ENCODE measurements at regions of chr1 and their contacts with region 1.

Region 1: DNA sequence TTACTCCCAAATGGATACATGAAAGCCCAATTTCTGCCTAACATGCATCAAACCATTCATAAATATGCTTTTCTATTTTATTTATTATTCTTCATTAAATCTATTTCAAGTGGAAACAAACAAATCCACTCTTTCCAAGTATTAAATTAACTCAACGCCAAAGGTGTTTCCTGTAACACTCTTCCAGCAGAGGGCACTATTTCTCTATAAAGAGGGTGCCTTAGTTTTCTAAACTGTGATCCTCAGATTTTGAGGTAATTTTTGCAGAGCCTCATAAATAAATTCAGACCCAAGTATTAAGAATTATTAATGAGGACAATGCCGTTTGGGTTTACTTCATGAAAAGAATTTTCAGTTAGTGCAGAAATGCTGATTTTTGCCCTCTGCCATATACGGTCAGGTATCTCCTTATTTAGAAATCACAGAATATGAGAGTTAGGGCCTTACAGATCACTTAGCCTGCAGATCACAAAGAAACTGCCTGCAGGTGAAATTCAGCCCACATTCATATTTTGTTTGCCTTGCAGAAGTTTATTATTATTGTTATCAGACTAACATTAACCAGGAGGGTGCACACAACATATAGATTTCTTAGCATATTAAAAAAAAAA is 40.1 kb upstream of the MYSM1 start:
- DNase-seq: peak; percentile 78
- H3K4me3 ChIP-seq: no peak overlapping the region
- H3K27ac ChIP-seq: no peak overlapping the region
- H3K4me1 ChIP-seq: no peaks in the 10 kb centered on the region
- CTCF ChIP-seq: peak; percentile 98

Region 2: GRCh38 chr1:59699227-59699847 is 959.4 kb after region 1 on chr1:
- CTCF ChIA-PET with region 1: no interaction called
- POLR2A ChIA-PET with region 1: no interaction called
- intact Hi-C with region 1: loop called (anchors 2 kb)
- DNase-seq: peak; percentile 47
- H3K4me3 ChIP-seq: no peak overlapping the region
- H3K27ac ChIP-seq: no peak overlapping the region
- H3K4me1 ChIP-seq: no peaks in the 10 kb centered on the region
- CTCF ChIP-seq: peak; percentile 97

Region 3: DNA sequence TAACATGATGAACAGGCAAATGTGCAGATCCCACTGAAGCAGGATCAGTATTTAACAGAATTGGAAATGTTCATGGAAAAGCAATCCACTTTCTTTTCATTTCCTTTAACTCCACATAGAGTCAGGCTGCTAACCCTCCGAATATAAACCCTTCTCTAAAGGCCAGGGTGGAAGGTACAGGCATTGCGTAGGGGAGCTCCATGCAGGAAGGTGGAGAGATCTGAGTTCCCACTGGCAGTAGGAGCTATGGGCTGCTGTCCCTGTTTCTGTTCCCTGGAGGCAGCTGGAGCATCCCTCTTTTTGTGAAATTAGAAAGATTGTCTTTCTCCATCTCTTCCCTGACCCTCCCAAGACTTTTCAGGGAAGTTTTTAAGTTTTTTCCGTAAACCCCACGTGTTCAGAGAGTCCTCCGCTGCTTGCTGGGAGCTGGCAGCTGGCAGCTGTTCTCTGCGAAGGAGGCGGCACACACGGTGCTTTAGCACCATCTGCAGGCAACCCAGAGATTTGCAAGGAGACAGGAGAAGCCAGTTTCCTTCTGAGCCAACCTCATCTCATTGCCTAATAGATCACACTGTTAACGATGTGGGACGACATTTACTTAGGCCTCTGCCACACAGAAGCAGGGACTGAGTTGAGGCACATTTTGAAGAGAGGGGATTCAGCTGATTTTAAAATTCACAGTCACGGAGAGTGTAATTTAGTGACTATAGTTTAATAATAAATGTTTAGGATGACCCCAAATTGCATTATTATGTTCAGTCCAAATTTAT is 1019.4 kb after region 1 on chr1:
- CTCF ChIA-PET with region 1: no interaction called
- POLR2A ChIA-PET with region 1: no interaction called
- intact Hi-C with region 1: loop called (anchors 1 kb)
- DNase-seq: peak; percentile 64
- H3K4me3 ChIP-seq: peak overlapping the region; percentile 18
- H3K27ac ChIP-seq: no peak overlapping the region
- H3K4me1 ChIP-seq: no peaks in the 10 kb centered on the region
- CTCF ChIP-seq: peak; percentile 91

Region 4: DNA sequence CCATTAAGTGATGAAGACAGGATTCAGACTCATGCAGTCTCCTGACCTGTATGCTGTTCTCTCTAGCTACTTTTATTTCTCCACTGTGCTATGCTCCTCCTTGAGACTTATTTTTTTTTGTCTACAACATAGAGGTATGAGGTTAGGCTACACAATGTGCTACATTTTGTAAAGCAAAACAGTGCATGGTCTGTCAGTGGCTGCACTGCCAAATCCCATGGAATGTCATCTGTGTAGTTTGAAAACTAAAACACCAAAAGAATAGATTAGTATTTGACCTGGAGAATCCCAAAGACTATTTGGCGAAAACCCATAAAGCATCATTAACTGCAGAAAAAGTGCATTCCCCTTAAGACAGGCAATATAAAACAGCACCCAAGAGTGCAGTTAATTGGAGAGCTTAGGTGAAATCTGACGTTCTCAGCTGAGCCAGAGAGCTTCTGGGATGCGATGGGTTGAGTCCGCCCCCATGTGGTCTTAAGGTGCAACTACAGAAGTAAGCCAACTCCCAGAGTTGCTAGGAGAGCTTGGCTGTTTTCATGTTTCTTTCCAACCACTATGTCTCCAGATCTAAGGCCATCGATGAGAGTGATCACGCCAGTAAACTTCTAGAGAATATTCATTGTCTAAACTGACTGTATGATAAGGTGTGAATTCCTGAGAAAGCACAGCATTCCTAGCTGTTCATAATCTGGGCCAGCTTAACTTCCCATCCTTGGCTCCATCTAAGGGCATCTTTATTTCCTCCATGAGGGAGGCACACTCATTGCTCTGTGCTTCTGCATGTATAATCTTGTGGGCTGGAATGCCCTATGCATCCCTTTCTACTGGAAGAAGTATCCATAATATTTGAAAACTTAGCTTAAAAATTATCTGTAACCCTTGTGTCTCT is 1207.3 kb after region 1 on chr1:
- CTCF ChIA-PET with region 1: no interaction called
- POLR2A ChIA-PET with region 1: no interaction called
- intact Hi-C with region 1: loop called (anchors 10 kb)
- DNase-seq: peak; percentile 61
- H3K4me3 ChIP-seq: no peak overlapping the region
- H3K27ac ChIP-seq: no peak overlapping the region
- H3K4me1 ChIP-seq: no peaks in the 10 kb centered on the region
- CTCF ChIP-seq: peak; percentile 86

Measured in OCI-LY7 (cell line).